ENCODE measurements at regions of chr22 and their contacts with region 1.

Region 1: GRCh38 chr22:37019309-37020125 is at the starts of genes MPST and TST:
- DNase-seq: peak; percentile 65
- ATAC-seq: peak; percentile 75
- H3K4me3 Mint-ChIP-seq: peak within 1 kb of the TSS; percentile 89
- H3K27ac Mint-ChIP-seq: peak within 1 kb of the TSS; percentile 87; the same call in 1 of the 2 replicates
- H3K4me1 Mint-ChIP-seq: peaks cover 31% of the 10 kb centered on the region
- H3K27me3 Mint-ChIP-seq: no peaks in the 10 kb centered on the region
- CTCF ChIP-seq: no peak
- total RNA-seq, gene MPST: 86.6 to 101 TPM (median 98.7 TPM) in 3 replicates
- total RNA-seq, gene TST: 24.4 to 33.3 TPM (median 32.8 TPM) in 3 replicates

Region 2: GRCh38 chr22:36998620-36999340 is 20.7 kb before region 1 on chr22:
- CTCF ChIA-PET with region 1: interaction called, 13 read pairs
- POLR2A ChIA-PET with region 1: no interaction called
- DNase-seq: peak; percentile 46
- ATAC-seq: peak; percentile 76
- H3K4me3 Mint-ChIP-seq: no peak overlapping the region
- H3K27ac Mint-ChIP-seq: no peak overlapping the region
- H3K4me1 Mint-ChIP-seq: peaks cover 8% of the 10 kb centered on the region
- H3K27me3 Mint-ChIP-seq: peaks cover 8% of the 10 kb centered on the region
- CTCF ChIP-seq: no peak; the same call in 1 of the 2 replicates

Region 3: GRCh38 chr22:37032546-37033460 is 13.3 kb after region 1 on chr22:
- CTCF ChIA-PET with region 1: interaction called, 38 read pairs
- POLR2A ChIA-PET with region 1: interaction called, 5 read pairs
- DNase-seq: no peak
- ATAC-seq: peak; percentile 46
- H3K4me3 Mint-ChIP-seq: no peak overlapping the region
- H3K27ac Mint-ChIP-seq: 0 out of 2 replicates have a peak overlapping the region, but pooled peaks have one; percentile 30
- H3K4me1 Mint-ChIP-seq: peaks cover 31% of the 10 kb centered on the region
- H3K27me3 Mint-ChIP-seq: peaks cover 8% of the 10 kb centered on the region
- CTCF ChIP-seq: no peak